ENCODE measurements at regions of chr9 and their contacts with region 1.

Region 1: GRCh38 chr9:133238851-133239532 is 29.9 kb upstream of the OBP2B start:
- DNase-seq: peak; percentile 80 to 87 (median 81)
- H3K4me3 ChIP-seq: peak overlapping the region; percentile 17
- H3K27ac ChIP-seq: peak overlapping the region; percentile 78 to 94
- H3K4me1 ChIP-seq: peaks cover 12% of the 10 kb centered on the region
- H3K27me3 ChIP-seq: no peaks in the 10 kb centered on the region
- CTCF ChIP-seq: peak; percentile 68 to 76 (median 72)
- EP300 ChIP-seq: no peak
- POLR2A ChIP-seq: no peak

Region 2: GRCh38 chr9:133275105-133276000 is 36.4 kb after region 1 on chr9 and contains the start of gene ABO:
- intact Hi-C with region 1: loop called in 3 of 4 experiments (anchors 5 kb)
- DNase-seq: peak; percentile 70 to 82 (median 77)
- H3K4me3 ChIP-seq: peak within 1 kb of the TSS; percentile 43
- H3K27ac ChIP-seq: peak within 1 kb of the TSS; percentile 93
- H3K4me1 ChIP-seq: peaks cover 8% of the 10 kb centered on the region
- H3K27me3 ChIP-seq: no peaks in the 10 kb centered on the region
- CTCF ChIP-seq: peak; percentile 25 to 77 (median 72)
- EP300 ChIP-seq: no peak
- POLR2A ChIP-seq: peak; percentile 26
- total RNA-seq, gene ABO: 16.0 to 27.7 (median 22.0) TPM

Region 3: GRCh38 chr9:133290751-133291302 is 51.8 kb after region 1 on chr9:
- intact Hi-C with region 1: no loop called
- DNase-seq: no peak
- H3K4me3 ChIP-seq: no peak overlapping the region
- H3K27ac ChIP-seq: no peak overlapping the region
- H3K4me1 ChIP-seq: no peaks in the 10 kb centered on the region
- H3K27me3 ChIP-seq: no peaks in the 10 kb centered on the region
- CTCF ChIP-seq: no peak
- EP300 ChIP-seq: no peak
- POLR2A ChIP-seq: no peak

Region 4: DNA sequence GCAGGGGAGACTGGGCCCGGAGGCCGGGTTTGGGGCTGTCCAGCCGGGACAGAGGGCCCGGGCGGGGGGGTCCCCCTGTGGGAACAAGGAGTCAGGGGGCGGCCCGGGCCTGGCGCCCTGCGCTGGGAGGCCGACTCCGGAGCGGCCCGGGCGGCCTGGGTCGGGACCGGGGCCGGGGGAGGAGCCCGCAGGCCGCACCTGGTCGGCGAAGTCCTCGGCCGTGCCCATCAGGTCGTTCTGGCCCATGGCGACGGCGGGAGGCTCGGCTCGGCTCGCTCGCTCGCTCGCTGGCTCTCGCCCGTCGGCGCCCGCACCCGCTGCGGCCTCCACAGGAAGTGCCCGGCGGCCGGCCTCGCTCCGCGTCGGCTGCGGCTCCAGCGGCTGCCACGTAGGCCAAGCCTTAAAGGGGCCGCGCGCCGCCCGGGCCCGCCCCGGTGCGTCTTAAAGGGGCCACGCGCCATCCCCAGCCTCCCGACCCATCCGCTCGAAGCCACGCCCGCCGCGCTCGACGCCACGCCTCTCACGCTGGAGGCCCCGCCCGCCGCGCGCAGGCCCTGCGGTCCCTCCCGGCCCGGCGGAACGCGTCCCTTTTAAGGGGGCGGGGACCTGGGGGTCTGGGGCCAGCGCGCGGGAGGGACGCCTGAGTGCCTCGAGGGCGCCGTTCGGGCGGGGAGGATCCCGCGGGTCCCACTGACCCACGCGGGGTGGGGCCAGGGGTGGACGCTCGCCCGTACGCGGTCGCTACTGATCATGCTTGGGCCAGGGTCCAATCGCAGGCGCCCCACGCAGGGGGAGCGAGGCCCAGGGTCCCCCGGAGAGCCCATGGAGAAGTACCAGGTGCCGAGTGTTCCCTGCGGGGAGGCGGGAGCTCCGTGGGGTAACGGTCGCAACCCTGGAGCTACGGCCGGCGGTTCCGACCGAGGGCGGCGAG is 137.0 kb after region 1 on chr9 and contains the starts of genes STKLD1 and SURF4:
- intact Hi-C with region 1: no loop called
- DNase-seq: peak; percentile 93 to 98 (median 95)
- H3K4me3 ChIP-seq: peak within 1 kb of the TSS; percentile 93
- H3K27ac ChIP-seq: peak within 1 kb of the TSS; percentile 45 to 91
- H3K4me1 ChIP-seq: peaks cover 10% of the 10 kb centered on the region
- H3K27me3 ChIP-seq: no peaks in the 10 kb centered on the region
- CTCF ChIP-seq: peak in 1 of 3 donors; percentile 45
- EP300 ChIP-seq: no peak
- POLR2A ChIP-seq: peak; percentile 89
- total RNA-seq, gene STKLD1: 0.48 to 1.7 (median 1.2) TPM
- total RNA-seq, gene SURF4: 58.7 to 126 (median 107) TPM

Region 5: DNA sequence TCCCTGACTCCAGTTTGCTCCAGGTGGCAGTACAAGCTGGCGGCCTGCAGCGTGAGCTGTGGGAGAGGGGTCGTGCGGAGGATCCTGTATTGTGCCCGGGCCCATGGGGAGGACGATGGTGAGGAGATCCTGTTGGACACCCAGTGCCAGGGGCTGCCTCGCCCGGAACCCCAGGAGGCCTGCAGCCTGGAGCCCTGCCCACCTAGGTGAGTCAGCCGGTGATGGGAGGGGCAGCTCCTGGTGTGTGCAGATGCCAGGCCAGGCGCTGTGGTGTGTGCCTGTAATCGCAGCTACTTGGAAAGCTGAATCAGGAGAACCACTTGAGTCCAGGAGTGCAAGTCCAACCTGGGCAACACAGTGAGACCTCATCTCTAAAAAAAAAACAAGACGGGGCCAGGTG is 210.8 kb after region 1 on chr9:
- intact Hi-C with region 1: no loop called
- DNase-seq: no peak
- H3K4me3 ChIP-seq: no peak overlapping the region
- H3K27ac ChIP-seq: no peak overlapping the region
- H3K4me1 ChIP-seq: no peaks in the 10 kb centered on the region
- H3K27me3 ChIP-seq: no peaks in the 10 kb centered on the region
- CTCF ChIP-seq: no peak
- EP300 ChIP-seq: no peak
- POLR2A ChIP-seq: no peak